Activated CD8-positive, alpha-beta memory T cell treated with anti-CD3 and anti-CD28 coated beads, Interleukin-2, amount 10 ng/mL, durations not matched to agents 7 days and 5 days (primary cell): ENCODE measurements at regions of chr10 and their contacts with region 1.

Region 1: GRCh38 chr10:89029785-89030437 is 39.3 kb downstream of the FAS start:
- DNase-seq: peak; percentile 80
- ATAC-seq: peak; percentile 72
- H3K4me3 Mint-ChIP-seq: no peak overlapping the region
- H3K27ac Mint-ChIP-seq: no peak overlapping the region
- H3K4me1 Mint-ChIP-seq: peaks cover 22% of the 10 kb centered on the region
- H3K27me3 Mint-ChIP-seq: no peaks in the 10 kb centered on the region

Region 2: DNA sequence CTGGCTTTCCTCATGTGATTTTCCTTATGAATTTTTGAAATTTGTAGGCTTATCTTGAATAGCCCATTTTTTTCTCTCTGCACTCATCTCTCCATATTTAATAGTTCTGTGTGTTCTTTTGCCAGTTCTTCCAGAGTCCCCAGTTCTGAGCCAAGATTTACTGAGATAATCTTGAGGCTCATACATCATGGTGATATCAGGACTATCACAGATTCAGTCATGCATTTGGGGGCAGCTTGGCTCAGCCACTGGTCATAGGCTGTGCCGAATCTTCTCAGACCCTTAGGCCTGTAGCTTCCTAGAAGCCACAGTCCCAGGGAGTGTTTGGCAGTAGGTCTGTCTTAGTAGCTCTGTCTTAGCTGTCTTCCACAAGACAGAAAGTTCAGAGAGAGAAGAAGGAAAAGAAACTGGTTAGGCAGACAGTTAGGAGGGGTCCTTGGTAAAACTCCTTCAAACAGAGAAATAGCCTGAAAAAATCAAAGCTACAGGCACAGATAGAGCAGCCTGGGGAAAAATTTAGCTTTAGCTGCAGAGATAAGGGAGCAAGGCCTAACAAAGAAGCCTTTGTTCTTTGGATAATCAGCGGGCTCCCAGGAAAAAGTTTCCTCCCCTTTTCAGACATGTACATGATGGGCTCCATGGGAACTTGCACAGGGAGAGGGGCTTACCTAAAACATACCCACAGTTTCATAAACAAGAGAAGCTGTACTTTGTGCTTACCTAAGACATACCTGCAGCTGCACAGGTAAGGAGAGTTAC is 10.2 kb before region 1 on chr10:
- CTCF ChIA-PET with region 1: interaction called, 11 read pairs
- DNase-seq: no peak
- ATAC-seq: no peak
- H3K4me3 Mint-ChIP-seq: no peak overlapping the region
- H3K27ac Mint-ChIP-seq: no peak overlapping the region
- H3K4me1 Mint-ChIP-seq: no peaks in the 10 kb centered on the region
- H3K27me3 Mint-ChIP-seq: no peaks in the 10 kb centered on the region

Region 3: DNA sequence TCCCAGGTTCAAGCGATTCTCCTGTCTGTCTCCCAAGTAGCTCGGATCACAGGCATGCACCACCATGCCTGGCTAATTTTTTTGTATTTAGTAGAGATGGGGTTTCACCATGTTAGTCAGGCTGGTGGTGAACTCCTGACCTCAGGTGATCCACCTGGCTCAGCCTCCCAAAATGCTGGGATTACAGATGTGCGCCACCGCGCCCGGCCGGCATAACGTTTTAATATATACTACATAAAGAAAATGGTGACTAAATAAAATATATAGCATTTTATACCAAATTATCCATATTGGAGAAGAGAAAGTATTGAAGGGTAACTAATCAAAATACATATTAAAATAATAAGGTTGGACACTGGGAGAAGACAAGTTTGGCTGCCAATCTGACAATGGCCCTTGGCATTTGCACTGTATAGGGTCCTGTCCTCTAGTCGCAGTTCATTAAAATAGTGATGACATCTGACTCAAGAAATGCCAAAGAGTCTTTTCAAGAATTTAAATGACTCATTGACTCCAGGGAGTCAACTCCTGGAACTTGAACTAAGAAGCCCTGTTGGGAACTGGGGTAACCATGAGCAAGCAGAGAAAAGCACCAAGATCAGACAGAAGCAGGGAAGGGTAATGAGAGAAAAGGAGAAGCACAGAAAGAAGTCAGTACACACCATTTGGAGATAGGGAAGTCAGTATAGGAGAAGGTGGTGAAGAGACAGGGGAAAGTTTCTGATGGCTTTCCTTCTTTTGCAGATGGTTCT is 86.1 kb after region 1 on chr10:
- CTCF ChIA-PET with region 1: interaction called, 11 read pairs
- DNase-seq: no peak
- ATAC-seq: no peak
- H3K4me3 Mint-ChIP-seq: no peak overlapping the region
- H3K27ac Mint-ChIP-seq: no peak overlapping the region
- H3K4me1 Mint-ChIP-seq: no peaks in the 10 kb centered on the region
- H3K27me3 Mint-ChIP-seq: peaks cover 26% of the 10 kb centered on the region

Region 4: GRCh38 chr10:89207181-89207800 is 177.4 kb after region 1 on chr10 and contains the start of gene CH25H:
- CTCF ChIA-PET with region 1: interaction called, 42 read pairs
- DNase-seq: peak; percentile 64
- ATAC-seq: peak; percentile 72
- H3K4me3 Mint-ChIP-seq: peak within 1 kb of the TSS; percentile 73
- H3K27ac Mint-ChIP-seq: peak within 1 kb of the TSS; percentile 38
- H3K4me1 Mint-ChIP-seq: peaks cover 19% of the 10 kb centered on the region
- H3K27me3 Mint-ChIP-seq: peaks cover 30% of the 10 kb centered on the region
- total RNA-seq, gene CH25H: not detected

Region 5: DNA sequence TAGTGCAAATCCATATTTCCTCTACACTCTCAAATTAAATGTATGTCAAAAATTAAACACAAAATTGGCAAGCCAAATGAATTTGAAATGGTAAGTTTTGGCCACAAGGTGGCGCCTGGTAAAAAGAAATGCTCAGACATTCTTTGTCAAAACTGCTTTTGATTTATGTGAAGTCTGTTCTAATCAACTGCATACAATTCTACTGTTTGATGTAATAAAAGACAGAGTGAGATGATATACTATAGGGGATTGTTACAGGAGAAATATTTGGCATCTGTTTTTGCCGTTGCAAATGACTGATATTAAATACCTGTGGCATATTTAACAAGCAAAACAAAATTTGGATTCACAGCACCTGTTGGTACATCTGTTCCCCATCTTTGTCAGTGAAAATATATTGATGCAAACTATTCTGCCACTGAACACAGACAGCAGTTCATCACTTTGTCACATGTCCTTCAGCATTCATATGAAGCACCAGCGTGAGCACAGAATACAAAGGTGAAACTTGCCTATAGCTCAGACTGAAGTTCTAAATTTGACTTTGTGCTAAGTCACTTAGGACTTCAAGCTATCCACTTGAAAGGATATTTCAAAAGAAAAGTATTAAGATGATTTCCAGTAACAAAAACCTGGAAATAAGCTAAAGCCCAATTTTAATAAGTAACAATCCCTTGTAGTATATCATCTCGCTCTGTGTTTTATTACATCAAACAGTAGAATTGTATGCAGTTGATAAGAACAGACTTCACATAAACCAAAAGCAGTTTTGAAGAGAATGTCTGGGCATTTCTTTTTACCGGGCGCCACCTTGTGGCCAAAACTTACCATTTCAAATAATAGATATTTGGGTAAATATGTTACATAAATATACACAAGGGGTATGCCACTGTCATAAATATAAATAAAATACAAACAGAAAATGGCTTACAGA is 187.4 kb after region 1 on chr10:
- CTCF ChIA-PET with region 1: interaction called, 56 read pairs
- DNase-seq: peak; percentile 76
- ATAC-seq: peak; percentile 53
- H3K4me3 Mint-ChIP-seq: no peak overlapping the region
- H3K27ac Mint-ChIP-seq: peak overlapping the region; percentile 72
- H3K4me1 Mint-ChIP-seq: peaks cover 15% of the 10 kb centered on the region
- H3K27me3 Mint-ChIP-seq: no peaks in the 10 kb centered on the region